PC-3 (cell line): ENCODE measurements at regions of chr7 and their contacts with region 1.

Region 1: GRCh38 chr7:138752568-138753518 is 45.0 kb upstream of the TMEM213 start:
- DNase-seq: peak; percentile 98
- ATAC-seq: peak; percentile 82
- H3K4me3 ChIP-seq: no peak overlapping the region
- H3K27ac ChIP-seq: peak overlapping the region; percentile 81
- H3K4me1 ChIP-seq: peaks cover 52% of the 10 kb centered on the region
- H3K27me3 ChIP-seq: no peaks in the 10 kb centered on the region
- CTCF ChIP-seq: no peak

Region 2: GRCh38 chr7:138679793-138680192 is 73.0 kb before region 1 on chr7:
- CTCF ChIA-PET with region 1: no interaction called
- POLR2A ChIA-PET with region 1: no interaction called
- intact Hi-C with region 1: loop called (anchors 2 kb)
- DNase-seq: no peak
- ATAC-seq: no peak
- H3K4me3 ChIP-seq: no peak overlapping the region
- H3K27ac ChIP-seq: no peak overlapping the region
- H3K4me1 ChIP-seq: no peaks in the 10 kb centered on the region
- H3K27me3 ChIP-seq: no peaks in the 10 kb centered on the region
- CTCF ChIP-seq: no peak

Region 3: GRCh38 chr7:138829287-138829686 is 76.4 kb after region 1 on chr7:
- CTCF ChIA-PET with region 1: no interaction called
- POLR2A ChIA-PET with region 1: no interaction called
- intact Hi-C with region 1: loop called (anchors 2 kb)
- DNase-seq: no peak
- ATAC-seq: no peak
- H3K4me3 ChIP-seq: no peak overlapping the region
- H3K27ac ChIP-seq: peak overlapping the region; percentile 71
- H3K4me1 ChIP-seq: peaks cover 13% of the 10 kb centered on the region
- H3K27me3 ChIP-seq: no peaks in the 10 kb centered on the region
- CTCF ChIP-seq: no peak

Region 4: GRCh38 chr7:138865843-138866242 is 113.0 kb after region 1 on chr7:
- CTCF ChIA-PET with region 1: interaction called, 3 read pairs
- POLR2A ChIA-PET with region 1: no interaction called
- intact Hi-C with region 1: loop called (anchors 2 kb)
- DNase-seq: peak; percentile 33
- ATAC-seq: 0 out of 2 replicates have a peak, but pooled peaks have one; percentile 10
- H3K4me3 ChIP-seq: no peak overlapping the region
- H3K27ac ChIP-seq: peak overlapping the region; percentile 93
- H3K4me1 ChIP-seq: peaks cover 18% of the 10 kb centered on the region
- H3K27me3 ChIP-seq: no peaks in the 10 kb centered on the region
- CTCF ChIP-seq: peak; percentile 73

Region 5: GRCh38 chr7:138981332-138982203 is 228.7 kb after region 1 on chr7 and contains the start of gene KIAA1549:
- CTCF ChIA-PET with region 1: no interaction called
- POLR2A ChIA-PET with region 1: no interaction called
- intact Hi-C with region 1: loop called (anchors 5 kb)
- DNase-seq: peak; percentile 77
- ATAC-seq: peak; percentile 79
- H3K4me3 ChIP-seq: peak within 1 kb of the TSS; percentile 90
- H3K27ac ChIP-seq: peak within 1 kb of the TSS; percentile 40
- H3K4me1 ChIP-seq: peaks cover 22% of the 10 kb centered on the region
- H3K27me3 ChIP-seq: no peaks in the 10 kb centered on the region
- CTCF ChIP-seq: no peak
- total RNA-seq, gene KIAA1549: 7.5 and 8.2 TPM in 2 replicates

Region 6: DNA sequence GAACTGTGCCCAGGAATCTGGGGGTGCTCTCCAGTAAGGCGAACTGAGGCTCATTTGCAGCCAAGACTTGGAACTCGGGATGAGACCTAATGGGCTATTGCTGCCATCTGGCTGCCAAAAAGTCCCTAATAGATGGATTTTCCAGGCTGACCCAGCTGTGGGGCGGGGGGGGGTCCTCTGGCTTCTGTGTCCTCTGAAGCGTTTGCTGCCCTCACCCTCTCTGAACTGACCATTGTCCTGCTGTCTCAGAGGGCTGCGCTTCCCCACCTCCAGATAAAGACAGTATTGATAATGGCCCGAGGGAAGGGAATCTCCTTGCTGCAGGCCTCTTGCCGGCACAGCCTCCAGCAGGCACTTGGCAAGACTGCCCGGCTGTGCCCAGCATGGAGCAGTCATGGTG is 817.3 kb after region 1 on chr7:
- CTCF ChIA-PET with region 1: no interaction called
- POLR2A ChIA-PET with region 1: no interaction called
- intact Hi-C with region 1: no loop called
- DNase-seq: no peak
- ATAC-seq: no peak
- H3K4me3 ChIP-seq: no peak overlapping the region
- H3K27ac ChIP-seq: no peak overlapping the region
- H3K4me1 ChIP-seq: no peaks in the 10 kb centered on the region
- H3K27me3 ChIP-seq: no peaks in the 10 kb centered on the region
- CTCF ChIP-seq: no peak